Natural killer cell (primary cell): ENCODE measurements at regions of chr12 and their contacts with region 1.

Region 1: DNA sequence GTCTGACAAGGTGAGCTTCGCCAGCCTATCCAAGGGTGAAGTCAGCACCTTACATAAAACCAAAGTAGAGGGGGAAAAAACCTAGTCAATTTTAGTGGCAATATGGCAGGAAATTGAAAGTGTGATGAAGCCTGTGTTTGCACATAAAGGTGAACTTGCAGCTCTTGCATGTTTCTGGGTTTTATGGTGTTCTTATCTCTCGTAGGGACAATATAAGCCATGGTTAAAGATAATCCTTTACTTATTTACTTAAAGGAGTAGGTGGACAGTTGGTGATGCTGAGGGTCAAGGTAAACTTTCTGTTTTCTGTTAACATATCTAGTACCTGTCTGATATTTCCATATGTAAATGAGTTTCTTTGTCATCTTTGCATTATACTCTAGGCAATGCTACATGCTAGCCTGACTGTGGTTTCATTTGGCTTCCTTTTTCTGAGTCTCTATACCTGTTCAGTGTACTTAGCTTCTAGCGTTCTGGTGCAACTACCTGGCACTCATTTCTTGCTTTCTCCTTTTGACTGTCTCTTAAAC is 32.8 kb downstream of the CCDC91 start:
- DNase-seq: peak in 1 of 2 donors; percentile 47
- ATAC-seq: peak in 2 of 3 donors; percentile 34 to 54
- H3K4me3 ChIP-seq: no peak overlapping the region
- H3K4me3 Mint-ChIP-seq: peak overlapping the region; percentile 68
- H3K27ac ChIP-seq: no peak overlapping the region
- H3K27ac Mint-ChIP-seq: peak overlapping the region; percentile 19 to 43
- H3K4me1 ChIP-seq: peaks cover 10% of the 10 kb centered on the region
- H3K4me1 Mint-ChIP-seq: peaks cover 39 to 59% of the 10 kb centered on the region in 2 donors
- H3K27me3 ChIP-seq: no peaks in the 10 kb centered on the region
- H3K27me3 Mint-ChIP-seq: no peaks in the 10 kb centered on the region
- CTCF ChIP-seq: no peak

Region 2: GRCh38 chr12:27840244-27840999 is 382.7 kb before region 1 on chr12:
- intact Hi-C with region 1: no loop called
- DNase-seq: no peak
- ATAC-seq: no peak
- H3K4me3 ChIP-seq: no peak overlapping the region
- H3K4me3 Mint-ChIP-seq: no peak overlapping the region
- H3K27ac ChIP-seq: no peak overlapping the region
- H3K27ac Mint-ChIP-seq: no peak overlapping the region
- H3K4me1 ChIP-seq: no peaks in the 10 kb centered on the region
- H3K4me1 Mint-ChIP-seq: no peaks in the 10 kb centered on the region
- H3K27me3 ChIP-seq: no peaks in the 10 kb centered on the region
- H3K27me3 Mint-ChIP-seq: no peaks in the 10 kb centered on the region
- CTCF ChIP-seq: no peak

Region 3: DNA sequence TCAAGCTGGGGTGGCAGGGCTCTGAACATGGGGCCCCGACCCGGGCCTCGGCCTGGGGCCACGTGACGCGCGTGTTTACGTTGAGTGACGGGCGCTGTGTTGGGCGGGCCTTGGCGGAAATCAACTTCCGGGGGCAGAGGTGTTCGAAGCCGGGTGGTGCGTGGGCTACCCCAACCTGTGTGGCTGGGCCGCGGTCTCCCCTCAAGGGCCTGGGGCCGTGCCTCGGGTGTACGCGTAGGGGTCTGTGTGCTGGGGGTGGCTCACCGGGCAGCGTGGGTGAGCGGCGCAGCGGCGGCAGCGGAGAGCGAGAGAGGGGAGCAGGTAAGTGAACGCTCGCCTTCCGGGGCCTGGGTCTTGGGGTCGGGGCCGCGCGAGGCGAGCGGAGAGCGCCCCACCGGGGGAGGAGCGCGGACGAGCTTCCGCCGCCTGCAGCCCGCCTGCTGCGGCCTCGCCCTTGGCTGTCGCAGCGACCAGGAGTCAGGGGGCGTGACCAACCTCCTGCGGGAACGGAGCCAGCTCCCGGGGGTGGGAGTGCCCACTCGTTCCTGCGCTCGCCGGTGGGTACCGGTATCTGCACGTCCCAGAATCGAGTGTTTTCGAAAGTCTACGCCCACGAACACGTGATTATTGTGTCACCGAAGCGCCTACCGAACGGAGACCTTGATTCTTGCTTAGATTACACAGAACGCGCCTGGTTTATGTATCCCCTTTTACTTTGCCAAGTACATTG is 32.6 kb before region 1 on chr12 and contains the start of gene CCDC91:
- intact Hi-C with region 1: loop called (anchors 2 kb)
- DNase-seq: peak; percentile 81 to 95
- ATAC-seq: peak; percentile 77 to 91 (median 81)
- H3K4me3 ChIP-seq: peak within 1 kb of the TSS; percentile 59
- H3K4me3 Mint-ChIP-seq: peak within 1 kb of the TSS; percentile 96
- H3K27ac ChIP-seq: peak within 1 kb of the TSS; percentile 88
- H3K27ac Mint-ChIP-seq: peak within 1 kb of the TSS; percentile 96 to 99
- H3K4me1 ChIP-seq: peaks cover 24% of the 10 kb centered on the region
- H3K4me1 Mint-ChIP-seq: peaks cover 41 to 52% of the 10 kb centered on the region in 2 donors
- H3K27me3 ChIP-seq: no peaks in the 10 kb centered on the region
- H3K27me3 Mint-ChIP-seq: peaks cover 0 to 8% of the 10 kb centered on the region in 2 donors
- CTCF ChIP-seq: no peak
- total RNA-seq, gene CCDC91: 48.8 to 65.8 (median 60.2) TPM

Region 4: GRCh38 chr12:28787151-28787550 is 564.1 kb after region 1 on chr12:
- intact Hi-C with region 1: no loop called
- DNase-seq: no peak
- ATAC-seq: no peak
- H3K4me3 ChIP-seq: no peak overlapping the region
- H3K4me3 Mint-ChIP-seq: no peak overlapping the region
- H3K27ac ChIP-seq: no peak overlapping the region
- H3K27ac Mint-ChIP-seq: no peak overlapping the region
- H3K4me1 ChIP-seq: no peaks in the 10 kb centered on the region
- H3K4me1 Mint-ChIP-seq: no peaks in the 10 kb centered on the region
- H3K27me3 ChIP-seq: no peaks in the 10 kb centered on the region
- H3K27me3 Mint-ChIP-seq: no peaks in the 10 kb centered on the region
- CTCF ChIP-seq: no peak